ENCODE measurements at regions of chr13 and their contacts with region 1.

Region 1: GRCh38 chr13:76816394-76816793 is 69.8 kb downstream of the KCTD12 start:
- DNase-seq: no peak

Region 2: DNA sequence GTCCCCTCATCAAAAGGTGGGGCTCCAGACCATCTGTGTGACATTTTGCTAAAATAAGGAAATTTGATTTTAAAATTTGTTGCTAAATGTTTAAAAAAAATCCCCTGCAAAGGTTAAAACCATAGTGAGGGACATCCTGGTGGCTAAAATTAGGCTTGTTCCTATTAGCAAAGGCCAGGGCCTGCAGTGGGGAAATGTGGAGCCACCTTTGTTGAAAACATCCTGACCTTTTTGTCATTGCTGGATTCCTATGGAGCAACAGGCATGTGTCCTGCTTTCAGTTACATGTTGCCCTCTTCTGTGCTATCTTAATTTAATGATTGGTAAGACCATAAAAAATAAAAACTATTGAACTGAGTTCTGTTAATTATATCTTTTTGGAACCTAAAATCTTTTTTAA is 454.5 kb before region 1 on chr13:
- intact Hi-C with region 1: no loop called
- DNase-seq: no peak

Region 3: GRCh38 chr13:76769271-76769791 is 47.1 kb before region 1 on chr13:
- intact Hi-C with region 1: loop called (anchors 5 kb)
- DNase-seq: no peak